PC-9 (cell line): ENCODE measurements at regions of chr17 and their contacts with region 1.

Region 1: GRCh38 chr17:67772679-67773078 is 52.6 kb upstream of the BPTF start:
- DNase-seq: no peak
- H3K4me3 ChIP-seq: no peak overlapping the region
- H3K27ac ChIP-seq: no peak overlapping the region
- H3K4me1 ChIP-seq: no peaks in the 10 kb centered on the region
- H3K27me3 ChIP-seq: no peaks in the 10 kb centered on the region
- CTCF ChIP-seq: no peak

Region 2: DNA sequence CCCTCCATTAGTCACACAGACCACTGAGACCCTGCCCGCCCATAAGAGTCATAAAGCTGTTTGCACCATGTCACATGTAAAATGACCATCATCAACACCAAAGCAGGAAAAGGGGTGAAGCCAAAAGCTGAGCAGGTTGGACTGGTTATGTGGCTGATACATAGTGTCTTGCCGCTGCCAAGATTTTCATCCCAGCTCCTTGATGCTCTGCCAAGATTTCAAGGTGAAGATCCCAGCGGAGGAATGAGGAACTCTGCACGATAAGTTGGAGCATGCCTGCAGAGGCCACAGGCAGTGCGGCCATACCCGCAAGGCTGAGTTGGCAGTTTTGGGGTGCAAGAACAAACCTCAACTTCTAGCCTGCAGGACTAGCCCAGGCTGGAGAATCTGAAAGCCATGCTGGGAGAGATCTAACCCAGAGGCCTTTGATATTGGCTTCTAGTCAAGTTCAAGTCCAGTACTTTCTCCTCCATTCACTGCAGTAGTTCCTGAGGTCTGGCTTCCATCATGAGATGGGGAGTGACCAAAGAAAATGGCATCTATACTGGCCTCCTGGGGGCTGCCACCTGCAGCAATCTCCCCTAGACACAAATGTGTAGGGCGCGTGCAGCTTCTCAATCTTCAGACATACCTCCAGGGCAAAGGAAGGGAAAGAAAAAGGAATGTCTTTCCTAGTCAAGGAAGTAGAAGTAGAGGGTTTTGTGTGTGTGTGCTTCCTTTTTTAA is 134.6 kb before region 1 on chr17:
- CTCF ChIA-PET with region 1: no interaction called
- POLR2A ChIA-PET with region 1: no interaction called
- intact Hi-C with region 1: no loop called
- DNase-seq: peak; percentile 88 to 98
- H3K4me3 ChIP-seq: peak overlapping the region; percentile 32; the same call in 1 of the 2 replicates
- H3K27ac ChIP-seq: peak overlapping the region; percentile 81
- H3K4me1 ChIP-seq: peaks cover 37% of the 10 kb centered on the region
- H3K27me3 ChIP-seq: no peaks in the 10 kb centered on the region
- CTCF ChIP-seq: no peak

Region 3: GRCh38 chr17:67682196-67682595 is 90.5 kb before region 1 on chr17:
- CTCF ChIA-PET with region 1: no interaction called
- POLR2A ChIA-PET with region 1: no interaction called
- intact Hi-C with region 1: no loop called
- DNase-seq: no peak
- H3K4me3 ChIP-seq: no peak overlapping the region
- H3K27ac ChIP-seq: no peak overlapping the region
- H3K4me1 ChIP-seq: no peaks in the 10 kb centered on the region
- H3K27me3 ChIP-seq: no peaks in the 10 kb centered on the region
- CTCF ChIP-seq: no peak

Region 4: DNA sequence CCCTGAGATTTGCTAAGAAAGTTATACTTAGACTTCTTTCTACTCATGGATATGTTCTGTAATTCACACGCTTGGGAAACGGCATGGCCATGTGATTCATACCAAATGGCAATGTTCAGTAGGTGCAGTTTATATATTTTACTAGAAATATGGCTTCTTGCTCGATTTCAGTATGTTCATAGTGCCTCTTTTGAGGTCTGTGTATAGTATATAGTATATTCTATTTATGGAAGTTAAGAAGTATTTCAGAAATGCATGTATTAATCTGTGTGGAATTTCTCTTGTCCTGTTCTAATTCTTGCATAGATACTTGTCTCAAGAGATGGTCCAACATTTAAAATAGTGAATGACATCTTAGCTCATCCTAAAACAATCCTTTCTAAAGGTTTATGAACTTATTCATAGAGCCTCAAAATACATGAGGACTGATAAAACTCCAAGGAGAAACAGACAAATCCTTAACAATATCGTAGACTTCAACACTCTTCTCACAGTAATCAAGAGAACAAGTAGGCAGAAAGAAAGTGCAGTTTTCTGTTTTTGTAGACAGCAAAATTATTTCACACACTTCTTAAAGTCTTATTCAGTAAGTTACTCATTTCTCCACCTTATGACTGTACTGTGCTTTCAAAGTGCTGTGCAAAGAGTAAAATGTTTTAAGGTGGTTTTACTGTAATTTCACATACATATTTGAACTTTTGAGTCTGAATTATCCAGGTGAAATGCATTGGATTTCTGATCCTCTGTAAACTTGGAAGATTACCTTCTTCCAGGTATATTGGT is 63.7 kb after region 1 on chr17:
- CTCF ChIA-PET with region 1: interaction called, 14 read pairs
- POLR2A ChIA-PET with region 1: no interaction called
- intact Hi-C with region 1: no loop called
- DNase-seq: no peak
- H3K4me3 ChIP-seq: no peak overlapping the region
- H3K27ac ChIP-seq: no peak overlapping the region
- H3K4me1 ChIP-seq: no peaks in the 10 kb centered on the region
- H3K27me3 ChIP-seq: no peaks in the 10 kb centered on the region
- CTCF ChIP-seq: no peak